T-cell (primary cell): ENCODE measurements at regions of chr1 and their contacts with region 1.

Region 1: GRCh38 chr1:172719694-172720138 is 60.8 kb downstream of the FASLG start:
- DNase-seq: peak in 3 of 35 experiments; percentile 27 to 77 (median 41)
- ATAC-seq: peak in 3 of 4 experiments; percentile 55 to 64 (median 57)
- H3K4me3 ChIP-seq: no peak overlapping the region
- H3K4me3 Mint-ChIP-seq: no peak overlapping the region
- H3K27ac ChIP-seq: no peak overlapping the region
- H3K27ac Mint-ChIP-seq: no peak overlapping the region
- H3K4me1 ChIP-seq: peaks cover 5 to 9% of the 10 kb centered on the region in 2 experiments
- H3K4me1 Mint-ChIP-seq: peaks cover 18 to 41% (median 40%) of the 10 kb centered on the region in 3 donors
- H3K27me3 ChIP-seq: no peaks in the 10 kb centered on the region
- H3K27me3 Mint-ChIP-seq: no peaks in the 10 kb centered on the region

Region 2: GRCh38 chr1:172609528-172609927 is 110.2 kb before region 1 on chr1:
- CTCF ChIA-PET with region 1: interaction called, 59 to 177 read pairs
- POLR2A ChIA-PET with region 1: interaction called in 1 of 2 experiments, 5 read pairs
- DNase-seq: peak in 1 of 35 experiments; percentile 60
- ATAC-seq: peak; percentile 58 to 81 (median 70)
- H3K4me3 ChIP-seq: no peak overlapping the region
- H3K4me3 Mint-ChIP-seq: no peak overlapping the region
- H3K27ac ChIP-seq: no peak overlapping the region
- H3K27ac Mint-ChIP-seq: no peak overlapping the region
- H3K4me1 ChIP-seq: no peaks in the 10 kb centered on the region
- H3K4me1 Mint-ChIP-seq: peaks cover 8 to 18% (median 8%) of the 10 kb centered on the region in 3 donors
- H3K27me3 ChIP-seq: no peaks in the 10 kb centered on the region
- H3K27me3 Mint-ChIP-seq: no peaks in the 10 kb centered on the region

Region 3: DNA sequence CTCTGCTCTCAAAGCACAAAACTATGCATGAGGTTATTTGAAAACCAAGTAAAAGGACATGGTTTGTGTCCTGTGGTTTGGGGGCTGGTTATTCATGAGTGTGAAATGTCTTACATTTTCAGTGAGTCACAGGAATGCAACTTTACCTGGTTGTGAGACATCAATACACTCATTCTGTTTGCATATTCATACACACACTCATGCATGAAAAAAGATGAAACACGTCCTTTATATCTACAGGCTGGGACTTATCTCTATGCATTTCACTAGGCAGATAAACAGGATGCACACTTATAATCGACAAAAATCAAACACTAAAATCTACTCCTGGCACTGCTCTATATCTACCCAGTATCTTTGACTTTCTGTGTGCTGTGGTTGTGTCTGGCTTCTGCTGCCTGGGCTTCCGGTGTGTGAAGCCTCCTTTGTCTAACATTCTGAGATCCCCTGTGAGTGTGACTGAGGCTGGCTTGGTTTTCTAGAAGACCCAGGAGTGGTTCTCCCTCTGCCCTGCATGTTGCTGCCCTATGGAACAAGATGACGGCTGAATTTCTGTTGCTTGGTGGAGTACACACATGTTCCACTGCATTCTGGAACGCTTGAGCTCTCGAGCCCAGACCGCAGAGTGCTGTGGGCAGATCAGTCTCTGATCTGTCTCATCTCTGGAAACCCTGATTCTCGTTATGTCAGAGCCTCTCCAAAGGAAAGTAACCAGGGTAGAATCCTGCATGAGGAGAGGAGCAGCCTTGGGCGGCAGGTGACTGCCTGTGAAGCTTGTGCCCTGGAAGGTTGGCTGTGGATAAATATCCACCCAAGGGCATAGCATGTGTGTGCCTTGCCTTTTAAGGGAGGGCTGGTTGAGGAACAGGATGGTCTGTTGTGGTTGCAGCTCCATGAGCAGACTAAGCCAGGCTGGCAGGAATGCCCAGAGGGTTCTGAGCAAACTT is 80.6 kb before region 1 on chr1:
- CTCF ChIA-PET with region 1: interaction called, 5 to 11 read pairs
- POLR2A ChIA-PET with region 1: interaction called in 1 of 2 experiments, 8 read pairs
- DNase-seq: peak; percentile 42 to 77 (median 57)
- ATAC-seq: peak; percentile 82 to 88 (median 84)
- H3K4me3 ChIP-seq: peak overlapping the region; percentile 6 to 7
- H3K4me3 Mint-ChIP-seq: peak overlapping the region; percentile 46 to 70 (median 62)
- H3K27ac ChIP-seq: peak overlapping the region; percentile 63
- H3K27ac Mint-ChIP-seq: peak overlapping the region; percentile 86 to 90
- H3K4me1 ChIP-seq: peaks cover 37 to 66% of the 10 kb centered on the region in 2 experiments
- H3K4me1 Mint-ChIP-seq: peaks cover 77 to 78% (median 78%) of the 10 kb centered on the region in 3 donors
- H3K27me3 ChIP-seq: no peaks in the 10 kb centered on the region
- H3K27me3 Mint-ChIP-seq: no peaks in the 10 kb centered on the region

Region 4: DNA sequence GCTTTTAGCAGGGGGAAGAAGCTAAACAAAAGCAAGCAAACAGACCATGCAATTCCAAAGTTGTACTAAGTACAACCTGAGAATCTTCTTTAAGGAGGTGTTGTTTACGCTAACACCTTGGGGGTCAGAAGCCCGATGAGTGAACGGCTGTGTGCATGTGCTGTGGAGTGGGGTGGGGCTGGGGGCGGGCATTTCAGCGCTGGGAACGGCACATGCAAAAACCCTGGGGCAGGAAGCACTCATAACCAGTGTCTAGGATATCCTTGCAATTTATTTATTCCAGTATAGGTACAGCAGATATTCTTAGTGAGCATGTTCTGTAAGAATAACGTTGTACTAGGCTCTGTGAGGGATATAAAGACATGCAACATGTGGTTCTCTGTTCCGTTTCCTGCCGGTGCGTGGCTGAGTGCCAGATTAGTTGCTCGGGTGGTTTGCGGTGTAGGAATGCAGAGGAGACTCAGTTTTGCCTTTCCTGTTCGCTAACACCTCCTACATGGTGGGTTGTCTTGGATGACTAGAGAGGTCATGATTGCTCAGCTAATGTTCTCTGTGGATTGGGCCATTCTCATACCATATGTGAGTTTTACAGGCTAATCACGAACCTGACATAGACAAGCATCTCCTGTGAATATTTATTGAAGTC is 57.1 kb before region 1 on chr1:
- CTCF ChIA-PET with region 1: interaction called, 6 to 14 read pairs
- POLR2A ChIA-PET with region 1: interaction called in 1 of 2 experiments, 5 read pairs
- DNase-seq: peak; percentile 71 to 91 (median 82)
- ATAC-seq: peak; percentile 82 to 91 (median 89)
- H3K4me3 ChIP-seq: peak overlapping the region in 1 of 2 donors; percentile 52
- H3K4me3 Mint-ChIP-seq: peak overlapping the region; percentile 71 to 76 (median 73)
- H3K27ac ChIP-seq: peak overlapping the region; percentile 62
- H3K27ac Mint-ChIP-seq: peak overlapping the region; percentile 70 to 80
- H3K4me1 ChIP-seq: peaks cover 34 to 43% of the 10 kb centered on the region in 2 experiments
- H3K4me1 Mint-ChIP-seq: peaks cover 65 to 76% (median 66%) of the 10 kb centered on the region in 3 donors
- H3K27me3 ChIP-seq: no peaks in the 10 kb centered on the region
- H3K27me3 Mint-ChIP-seq: no peaks in the 10 kb centered on the region

Region 5: GRCh38 chr1:172671591-172671990 is 48.1 kb before region 1 on chr1:
- CTCF ChIA-PET with region 1: interaction called in 1 of 2 experiments, 12 read pairs
- POLR2A ChIA-PET with region 1: interaction called in 1 of 2 experiments, 5 read pairs
- DNase-seq: no peak
- ATAC-seq: no peak
- H3K4me3 ChIP-seq: no peak overlapping the region
- H3K4me3 Mint-ChIP-seq: no peak overlapping the region
- H3K27ac ChIP-seq: no peak overlapping the region
- H3K27ac Mint-ChIP-seq: no peak overlapping the region
- H3K4me1 ChIP-seq: peaks cover 43 to 53% of the 10 kb centered on the region in 2 experiments
- H3K4me1 Mint-ChIP-seq: peaks cover 69 to 79% (median 69%) of the 10 kb centered on the region in 3 donors
- H3K27me3 ChIP-seq: no peaks in the 10 kb centered on the region
- H3K27me3 Mint-ChIP-seq: no peaks in the 10 kb centered on the region

Region 6: GRCh38 chr1:172699111-172699510 is 20.6 kb before region 1 on chr1:
- CTCF ChIA-PET with region 1: interaction called in 1 of 2 experiments, 10 read pairs
- POLR2A ChIA-PET with region 1: no interaction called
- DNase-seq: peak; percentile 46 to 85 (median 68)
- ATAC-seq: peak; percentile 90 to 95 (median 94)
- H3K4me3 ChIP-seq: no peak overlapping the region
- H3K4me3 Mint-ChIP-seq: peak overlapping the region; percentile 41 to 76 (median 53)
- H3K27ac ChIP-seq: peak overlapping the region; percentile 86
- H3K27ac Mint-ChIP-seq: peak overlapping the region in 1 of 2 donors; percentile 95
- H3K4me1 ChIP-seq: peaks cover 57 to 65% of the 10 kb centered on the region in 2 experiments
- H3K4me1 Mint-ChIP-seq: peaks cover 0 to 55% (median 0%) of the 10 kb centered on the region in 3 donors
- H3K27me3 ChIP-seq: no peaks in the 10 kb centered on the region
- H3K27me3 Mint-ChIP-seq: no peaks in the 10 kb centered on the region